Natural killer cell (primary cell): ENCODE measurements at regions of chr1 and their contacts with region 1.

Region 1: GRCh38 chr1:100921109-100921706 is 25.3 kb downstream of the SLC30A7 start:
- DNase-seq: peak in 1 of 2 donors; percentile 81
- ATAC-seq: peak; percentile 66 to 76 (median 67)
- H3K4me3 ChIP-seq: no peak overlapping the region
- H3K4me3 Mint-ChIP-seq: no peak overlapping the region
- H3K27ac ChIP-seq: no peak overlapping the region
- H3K27ac Mint-ChIP-seq: no peak overlapping the region
- H3K4me1 ChIP-seq: peaks cover 2% of the 10 kb centered on the region
- H3K4me1 Mint-ChIP-seq: peaks cover 16 to 17% of the 10 kb centered on the region in 2 donors
- H3K27me3 ChIP-seq: no peaks in the 10 kb centered on the region
- H3K27me3 Mint-ChIP-seq: no peaks in the 10 kb centered on the region
- CTCF ChIP-seq: peak; percentile 96

Region 2: DNA sequence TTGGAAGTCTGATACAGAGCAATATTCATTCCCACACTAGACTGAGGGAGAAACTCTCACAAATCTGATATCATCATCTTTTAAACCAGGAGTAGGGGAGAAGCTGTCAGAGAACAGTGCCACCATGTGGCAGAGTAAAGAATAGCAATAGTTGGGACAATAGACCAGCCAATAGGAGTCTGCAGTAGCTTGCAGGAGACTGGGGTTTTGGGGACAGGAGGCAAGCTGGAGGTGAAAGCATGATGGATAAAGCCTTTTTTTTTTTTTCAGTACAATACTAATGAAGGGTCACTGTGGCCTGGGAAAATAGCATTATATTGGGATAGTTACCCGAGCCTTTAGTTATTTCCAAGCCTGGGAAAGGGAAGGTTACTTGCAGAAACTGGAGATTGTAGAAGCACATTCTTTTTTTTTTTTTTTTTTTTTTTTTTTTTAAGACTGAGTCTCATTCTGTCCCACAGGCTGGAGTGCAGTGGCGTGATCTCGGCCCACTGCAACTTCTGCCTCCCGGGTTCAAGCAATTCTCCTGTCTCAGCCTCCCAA is 436.3 kb after region 1 on chr1:
- intact Hi-C with region 1: loop called (anchors 1 kb)
- DNase-seq: peak; percentile 54 to 94
- ATAC-seq: peak; percentile 96 to 100 (median 99)
- H3K4me3 ChIP-seq: no peak overlapping the region
- H3K4me3 Mint-ChIP-seq: peak overlapping the region; percentile 25
- H3K27ac ChIP-seq: no peak overlapping the region
- H3K27ac Mint-ChIP-seq: peak overlapping the region; percentile 83 to 86
- H3K4me1 ChIP-seq: no peaks in the 10 kb centered on the region
- H3K4me1 Mint-ChIP-seq: peaks cover 22 to 29% of the 10 kb centered on the region in 2 donors
- H3K27me3 ChIP-seq: no peaks in the 10 kb centered on the region
- H3K27me3 Mint-ChIP-seq: no peaks in the 10 kb centered on the region
- CTCF ChIP-seq: peak; percentile 82

Region 3: DNA sequence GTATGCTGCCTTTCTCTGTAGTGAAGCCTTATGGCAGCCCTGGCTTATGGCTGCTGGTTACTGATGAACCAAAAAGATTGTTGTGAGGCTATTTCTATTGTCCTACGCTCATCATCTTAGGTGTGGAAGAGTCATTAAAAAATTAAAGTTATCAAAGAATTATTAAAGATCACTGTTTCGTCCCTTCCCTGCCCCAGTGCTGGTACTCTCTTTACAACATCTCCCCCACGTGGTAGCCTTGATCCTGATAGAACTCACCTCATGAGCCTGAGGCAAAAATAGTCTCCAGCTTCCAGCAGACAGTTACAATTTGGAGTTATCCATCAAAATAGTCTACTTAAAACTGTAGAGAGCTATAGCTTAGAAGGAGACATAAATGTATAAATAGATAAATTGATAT is 517.2 kb after region 1 on chr1:
- intact Hi-C with region 1: loop called (anchors 1 kb)
- DNase-seq: peak in 1 of 2 donors; percentile 36
- ATAC-seq: peak in 1 of 3 donors; percentile 58
- H3K4me3 ChIP-seq: no peak overlapping the region
- H3K4me3 Mint-ChIP-seq: no peak overlapping the region
- H3K27ac ChIP-seq: no peak overlapping the region
- H3K27ac Mint-ChIP-seq: no peak overlapping the region
- H3K4me1 ChIP-seq: peaks cover 9% of the 10 kb centered on the region
- H3K4me1 Mint-ChIP-seq: no peaks in the 10 kb centered on the region
- H3K27me3 ChIP-seq: no peaks in the 10 kb centered on the region
- H3K27me3 Mint-ChIP-seq: peaks cover 0 to 3% of the 10 kb centered on the region in 2 donors
- CTCF ChIP-seq: peak; percentile 19